H1 (cell line): ENCODE measurements at regions of chr11 and their contacts with region 1.

Region 1: DNA sequence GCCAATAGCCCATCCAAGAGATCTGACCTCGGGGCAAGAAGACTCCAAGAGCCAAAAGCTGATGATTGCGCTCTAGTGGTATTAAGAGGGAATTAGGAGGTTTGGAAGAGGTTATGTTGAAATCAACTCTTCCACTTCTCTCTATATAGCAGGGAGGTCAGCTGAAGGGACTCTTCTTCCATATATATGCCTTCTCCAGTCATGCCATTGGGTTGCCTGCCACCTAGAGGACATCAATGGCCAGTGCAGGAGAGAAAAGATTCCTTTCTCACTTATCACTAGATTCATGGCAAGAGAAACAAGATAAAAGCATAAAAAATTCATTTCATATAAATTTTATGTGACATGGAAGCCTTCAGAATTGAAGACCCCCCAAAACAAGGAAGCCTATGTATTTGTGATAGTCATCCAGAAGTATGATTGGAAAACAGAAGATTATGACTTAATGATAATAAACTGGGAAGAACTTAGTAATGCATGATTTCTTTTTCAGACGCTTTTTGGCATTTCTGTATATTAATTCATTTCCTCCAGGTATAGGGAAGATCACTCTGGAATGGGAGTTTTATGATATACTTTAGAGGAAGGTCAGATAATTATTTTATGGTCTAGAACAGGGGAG is 435.1 kb upstream of the DDI1 start:
- DNase-seq: peak in 1 of 2 experiments; percentile 59
- H3K4me3 ChIP-seq: no peak overlapping the region
- H3K27ac ChIP-seq: no peak overlapping the region
- H3K4me1 ChIP-seq: no peaks in the 10 kb centered on the region
- H3K27me3 ChIP-seq: no peaks in the 10 kb centered on the region
- CTCF ChIP-seq: peak in 2 of 3 experiments; percentile 78 to 86; a peak in 3 of 4 replicates
- EP300 ChIP-seq: no peak
- POLR2A ChIP-seq: no peak
- RAD21 ChIP-seq: peak; percentile 93 to 94

Region 2: GRCh38 chr11:103257360-103257759 is 344.0 kb before region 1 on chr11:
- CTCF ChIA-PET with region 1: interaction called, 15 read pairs
- POLR2A ChIA-PET with region 1: no interaction called
- DNase-seq: no peak
- H3K4me3 ChIP-seq: no peak overlapping the region
- H3K27ac ChIP-seq: no peak overlapping the region
- H3K4me1 ChIP-seq: no peaks in the 10 kb centered on the region
- H3K27me3 ChIP-seq: no peaks in the 10 kb centered on the region
- CTCF ChIP-seq: peak in 2 of 3 experiments; percentile 51 to 62; a peak in 3 of 4 replicates
- EP300 ChIP-seq: no peak
- POLR2A ChIP-seq: no peak
- RAD21 ChIP-seq: peak; percentile 62 to 69

Region 3: DNA sequence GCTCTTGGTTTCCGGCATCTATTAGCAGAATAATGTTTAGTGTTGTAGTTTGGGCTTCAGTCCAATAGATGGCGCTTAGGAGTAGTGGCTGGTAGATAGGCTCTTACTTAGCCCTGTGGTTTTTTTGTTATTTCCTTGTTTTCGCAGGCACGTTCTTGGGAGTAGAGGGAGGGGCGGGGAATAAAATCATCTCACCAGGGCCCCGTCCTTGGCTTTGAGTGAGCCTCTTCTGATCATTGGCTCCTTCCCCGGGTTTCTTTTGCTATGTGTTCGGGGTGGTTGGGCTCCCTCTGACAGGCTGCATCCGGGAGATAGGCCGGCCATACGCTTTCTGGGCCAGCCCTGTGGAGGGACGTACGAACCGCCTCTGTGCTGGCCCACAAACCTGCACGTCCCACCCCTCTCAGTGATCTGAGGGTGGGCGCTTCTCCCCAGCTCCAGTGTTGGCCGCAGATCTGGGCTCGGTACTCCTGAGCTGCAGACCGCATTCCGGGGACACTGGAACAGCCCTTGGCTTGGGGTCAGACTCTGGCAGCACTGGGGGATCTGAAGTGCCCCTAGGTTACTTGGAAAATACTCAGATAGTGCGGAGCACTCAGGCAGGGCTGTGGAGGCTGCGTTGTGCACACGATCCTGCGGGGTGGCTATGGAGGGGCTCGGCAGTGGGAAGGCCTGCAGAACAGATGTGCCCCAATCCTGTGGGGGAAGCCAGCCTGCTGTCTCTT is 275.1 kb before region 1 on chr11:
- CTCF ChIA-PET with region 1: interaction called, 27 read pairs
- POLR2A ChIA-PET with region 1: no interaction called
- DNase-seq: peak; percentile 41 to 65
- H3K4me3 ChIP-seq: peak overlapping the region in 1 of 4 experiments; percentile 14; a peak in 2 of 8 replicates
- H3K27ac ChIP-seq: no peak overlapping the region
- H3K4me1 ChIP-seq: peaks cover 0 to 10% (median 3%) of the 10 kb centered on the region in 4 experiments; a peak in 4 of 7 replicates
- H3K27me3 ChIP-seq: no peaks in the 10 kb centered on the region
- CTCF ChIP-seq: peak in 2 of 3 experiments; percentile 62 to 80; a peak in 3 of 4 replicates
- EP300 ChIP-seq: no peak; a peak in 1 of 3 replicates
- POLR2A ChIP-seq: no peak
- RAD21 ChIP-seq: peak; percentile 74

Region 4: DNA sequence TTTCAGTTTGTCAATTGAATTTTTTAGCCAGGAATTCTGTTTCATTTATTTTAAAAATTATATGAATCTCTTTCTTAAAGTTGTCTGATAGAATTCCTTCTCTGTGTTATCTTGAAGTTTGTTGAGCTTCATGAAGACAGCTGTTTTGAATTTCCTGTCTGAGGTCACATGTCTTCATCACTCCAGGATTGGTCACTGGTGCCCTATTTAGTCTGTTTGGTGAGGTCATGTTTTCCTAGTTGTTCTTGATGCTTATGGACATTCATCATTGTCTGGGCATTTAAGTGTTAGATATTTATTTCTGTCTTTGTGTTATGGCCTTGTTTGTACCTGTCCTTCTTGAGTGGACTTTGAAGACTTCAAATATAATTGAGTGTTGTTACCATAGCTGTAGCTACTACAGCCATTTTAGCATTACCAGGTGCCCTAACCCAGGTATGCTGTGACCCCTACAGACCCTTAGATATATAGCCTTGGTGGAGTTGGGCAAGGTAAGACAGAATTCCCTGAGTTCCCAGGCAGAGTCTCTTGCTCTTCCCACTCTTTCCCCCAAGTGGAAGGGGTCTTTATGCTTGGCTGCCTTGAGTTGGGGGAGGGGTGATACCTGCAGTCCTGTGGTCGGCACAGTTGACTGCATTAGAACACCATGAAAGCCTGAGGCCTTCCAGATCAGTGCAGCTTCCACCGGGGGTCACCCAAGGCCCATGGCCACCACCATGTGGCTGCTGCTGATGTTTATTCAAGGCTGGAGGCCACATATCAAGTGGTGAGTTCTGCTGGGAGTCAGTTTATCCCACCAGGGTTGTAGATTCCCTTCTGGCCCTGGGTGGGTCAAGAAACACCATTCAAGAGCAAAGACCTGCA is 262.5 kb before region 1 on chr11:
- CTCF ChIA-PET with region 1: interaction called, 17 read pairs
- POLR2A ChIA-PET with region 1: no interaction called
- DNase-seq: peak; percentile 39 to 50
- H3K4me3 ChIP-seq: no peak overlapping the region
- H3K27ac ChIP-seq: no peak overlapping the region
- H3K4me1 ChIP-seq: peaks cover 0 to 4% (median 1%) of the 10 kb centered on the region in 4 experiments; a peak in 3 of 7 replicates
- H3K27me3 ChIP-seq: no peaks in the 10 kb centered on the region
- CTCF ChIP-seq: peak; percentile 58 to 71 (median 66)
- EP300 ChIP-seq: no peak
- POLR2A ChIP-seq: no peak
- RAD21 ChIP-seq: peak; percentile 81 to 85

Region 5: GRCh38 chr11:103499710-103500340 is 101.5 kb before region 1 on chr11:
- CTCF ChIA-PET with region 1: no interaction called
- POLR2A ChIA-PET with region 1: no interaction called
- DNase-seq: no peak
- H3K4me3 ChIP-seq: no peak overlapping the region
- H3K27ac ChIP-seq: no peak overlapping the region
- H3K4me1 ChIP-seq: no peaks in the 10 kb centered on the region
- H3K27me3 ChIP-seq: no peaks in the 10 kb centered on the region
- CTCF ChIP-seq: no peak
- EP300 ChIP-seq: no peak
- POLR2A ChIP-seq: no peak; a peak in 1 of 3 replicates
- RAD21 ChIP-seq: no peak

Region 6: GRCh38 chr11:103586756-103587155 is 14.6 kb before region 1 on chr11:
- CTCF ChIA-PET with region 1: interaction called, 13 read pairs
- POLR2A ChIA-PET with region 1: no interaction called
- DNase-seq: no peak
- H3K4me3 ChIP-seq: no peak overlapping the region
- H3K27ac ChIP-seq: no peak overlapping the region
- H3K4me1 ChIP-seq: no peaks in the 10 kb centered on the region
- H3K27me3 ChIP-seq: no peaks in the 10 kb centered on the region
- CTCF ChIP-seq: no peak
- EP300 ChIP-seq: no peak
- POLR2A ChIP-seq: no peak
- RAD21 ChIP-seq: no peak

Region 7: GRCh38 chr11:103877221-103877620 is 275.9 kb after region 1 on chr11:
- CTCF ChIA-PET with region 1: no interaction called
- POLR2A ChIA-PET with region 1: no interaction called
- DNase-seq: no peak
- H3K4me3 ChIP-seq: no peak overlapping the region
- H3K27ac ChIP-seq: no peak overlapping the region
- H3K4me1 ChIP-seq: no peaks in the 10 kb centered on the region
- H3K27me3 ChIP-seq: no peaks in the 10 kb centered on the region
- CTCF ChIP-seq: no peak
- EP300 ChIP-seq: no peak
- POLR2A ChIP-seq: no peak
- RAD21 ChIP-seq: peak; percentile 12 to 31; a peak in 3 of 4 replicates